Sigmoid colon (tissue), 7 donors: ENCODE measurements at regions of chr17 and their contacts with region 1.

Region 1: GRCh38 chr17:46154151-46154816 is 38.9 kb downstream of the KANSL1 start:
- DNase-seq: no peak
- H3K4me3 ChIP-seq: no peak overlapping the region
- H3K27ac ChIP-seq: peak overlapping the region in 3 of 4 donors; percentile 46 to 50 (median 49)
- H3K4me1 ChIP-seq: peaks cover 0 to 98% (median 95%) of the 10 kb centered on the region in 4 donors
- H3K27me3 ChIP-seq: no peaks in the 10 kb centered on the region
- CTCF ChIP-seq: no peak
- EP300 ChIP-seq: no peak
- POLR2A ChIP-seq: no peak

Region 2: GRCh38 chr17:45371414-45372327 is 782.6 kb before region 1 on chr17:
- intact Hi-C with region 1: no loop called
- DNase-seq: peak; percentile 90
- H3K4me3 ChIP-seq: peak overlapping the region in 3 of 4 donors; percentile 34 to 45 (median 42)
- H3K27ac ChIP-seq: peak overlapping the region; percentile 80 to 88 (median 85)
- H3K4me1 ChIP-seq: peaks cover 0 to 33% (median 26%) of the 10 kb centered on the region in 4 donors
- H3K27me3 ChIP-seq: no peaks in the 10 kb centered on the region
- CTCF ChIP-seq: no peak
- EP300 ChIP-seq: no peak
- POLR2A ChIP-seq: peak in 1 of 2 donors; percentile 35

Region 3: DNA sequence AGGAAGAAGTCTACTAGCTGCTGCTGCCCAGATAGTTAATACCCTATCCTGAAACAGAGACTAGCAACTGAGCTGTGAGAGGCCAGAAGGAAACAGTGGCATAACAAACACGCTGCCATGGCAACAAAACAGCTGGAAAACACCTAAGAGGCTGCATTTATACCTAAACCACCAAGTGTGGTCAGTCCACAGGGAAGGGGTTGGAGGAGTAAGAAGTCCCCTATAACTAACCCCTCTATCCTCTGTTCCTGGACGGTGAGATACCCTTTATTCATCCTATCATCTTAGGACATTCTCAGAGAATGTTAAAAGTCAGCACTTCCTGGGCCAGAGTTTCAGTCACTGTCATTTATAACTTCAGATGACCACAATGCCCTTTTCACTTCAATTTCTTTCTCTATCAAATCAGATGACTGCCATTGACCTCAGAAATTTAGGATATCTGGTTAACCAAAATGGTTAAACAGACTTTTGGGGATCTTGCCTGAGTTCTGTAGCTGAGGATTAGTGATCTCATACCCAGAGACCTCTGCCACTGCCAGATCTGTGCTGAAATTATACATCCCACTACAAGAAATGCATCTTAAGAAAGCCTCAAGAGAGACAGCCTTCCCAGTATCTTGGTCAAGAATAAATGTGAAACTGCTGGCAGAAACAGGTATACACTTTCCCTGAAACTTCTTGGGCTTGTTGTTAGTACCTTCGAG is 119.0 kb before region 1 on chr17:
- intact Hi-C with region 1: no loop called
- DNase-seq: no peak
- H3K4me3 ChIP-seq: no peak overlapping the region
- H3K27ac ChIP-seq: no peak overlapping the region
- H3K4me1 ChIP-seq: peaks cover 0 to 23% (median 14%) of the 10 kb centered on the region in 4 donors
- H3K27me3 ChIP-seq: no peaks in the 10 kb centered on the region
- CTCF ChIP-seq: no peak
- EP300 ChIP-seq: no peak
- POLR2A ChIP-seq: no peak

Region 4: GRCh38 chr17:46115699-46116098 is 38.6 kb before region 1 on chr17:
- intact Hi-C with region 1: no loop called
- DNase-seq: no peak
- H3K4me3 ChIP-seq: peak overlapping the region in 1 of 4 donors; percentile 13
- H3K27ac ChIP-seq: peak overlapping the region; percentile 23 to 74 (median 55)
- H3K4me1 ChIP-seq: peaks cover 0 to 85% (median 66%) of the 10 kb centered on the region in 4 donors
- H3K27me3 ChIP-seq: no peaks in the 10 kb centered on the region
- CTCF ChIP-seq: no peak
- EP300 ChIP-seq: no peak
- POLR2A ChIP-seq: no peak

Region 5: GRCh38 chr17:46167826-46168569 is 13.7 kb after region 1 on chr17:
- intact Hi-C with region 1: loop called (anchors 2 kb)
- DNase-seq: no peak
- H3K4me3 ChIP-seq: no peak overlapping the region
- H3K27ac ChIP-seq: no peak overlapping the region
- H3K4me1 ChIP-seq: peaks cover 0 to 94% (median 77%) of the 10 kb centered on the region in 4 donors
- H3K27me3 ChIP-seq: no peaks in the 10 kb centered on the region
- CTCF ChIP-seq: no peak
- EP300 ChIP-seq: no peak
- POLR2A ChIP-seq: no peak